HEK293 (cell line): ENCODE measurements at regions of chr17 and their contacts with region 1.

Region 1: DNA sequence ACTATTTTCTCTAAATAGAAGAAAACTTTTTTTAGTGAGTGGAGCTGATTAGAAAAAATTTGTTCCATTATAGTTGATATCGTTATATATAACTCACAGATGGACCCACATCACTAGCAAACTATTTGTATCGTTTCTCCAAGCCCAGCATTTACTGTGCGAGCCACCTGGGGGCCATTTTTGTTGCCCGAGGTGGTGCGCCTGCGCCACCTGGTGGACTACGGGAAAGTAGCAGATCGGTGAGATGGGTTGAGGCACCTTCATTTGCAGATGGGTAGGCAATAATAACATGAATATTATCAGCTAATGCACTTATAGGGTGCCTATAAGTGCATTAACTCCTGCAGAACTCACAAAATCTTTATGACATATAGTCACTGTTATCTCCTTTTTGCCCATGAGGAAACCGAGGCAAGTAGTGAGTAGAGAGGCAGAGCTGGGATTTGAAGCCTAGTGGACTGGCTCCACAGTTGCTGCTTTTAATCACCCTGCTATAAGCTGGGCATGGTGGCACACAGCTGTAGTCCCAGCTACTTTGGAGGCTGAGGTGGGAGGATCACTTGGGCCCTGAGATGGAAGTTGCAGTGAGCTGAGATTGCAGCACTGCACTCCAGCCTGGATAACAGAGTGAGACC is 23.2 kb upstream of the NTN1 start:
- H3K4me3 ChIP-seq: no peak overlapping the region
- H3K27ac ChIP-seq: no peak overlapping the region
- H3K4me1 ChIP-seq: peaks cover 5% of the 10 kb centered on the region; the same call in 1 of the 2 replicates
- CTCF ChIP-seq: peak; percentile 77

Region 2: DNA sequence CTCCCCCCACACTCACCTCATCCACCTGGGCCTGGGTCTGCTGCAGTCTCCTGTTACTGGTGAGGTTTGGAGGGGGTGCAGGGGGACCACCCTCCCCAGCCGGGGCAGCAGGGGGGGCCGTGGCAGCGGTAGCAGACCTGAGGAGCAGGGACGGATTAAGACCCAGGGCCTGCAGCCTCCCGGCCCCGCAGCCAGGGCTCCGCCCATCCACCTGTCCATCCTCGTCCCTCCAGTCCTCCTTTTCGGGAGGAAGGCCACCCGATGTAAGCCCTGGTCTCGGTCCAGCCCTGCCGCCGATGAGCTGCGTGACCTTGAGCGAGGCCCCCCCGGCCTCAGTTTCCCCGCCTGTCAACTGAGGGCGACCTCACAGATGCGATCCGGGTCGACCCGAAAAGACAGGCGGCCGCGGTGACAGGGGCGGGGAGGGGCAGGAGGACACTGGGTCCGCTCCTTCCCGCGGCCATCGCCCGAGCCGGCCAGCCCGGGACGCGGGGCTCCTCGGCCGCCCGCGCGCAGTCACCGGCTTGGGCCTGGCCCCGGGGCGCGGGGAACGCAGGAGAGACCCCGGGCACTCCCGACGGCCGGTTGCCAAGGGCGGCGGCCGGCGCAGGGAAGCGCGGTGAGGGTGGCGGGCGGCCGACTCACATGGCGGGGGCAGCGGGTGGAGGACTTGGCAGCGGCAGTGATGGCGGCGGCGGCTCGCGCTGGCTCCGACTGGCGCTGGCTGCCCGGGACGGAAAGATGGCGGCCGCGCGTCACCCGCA is 835.7 kb before region 1 on chr17 and contains the start of gene VAMP2:
- CTCF ChIA-PET with region 1: no interaction called
- POLR2A ChIA-PET with region 1: no interaction called
- H3K4me3 ChIP-seq: peak within 1 kb of the TSS; percentile 89
- H3K27ac ChIP-seq: peak within 1 kb of the TSS; percentile 96
- H3K4me1 ChIP-seq: peaks cover 24% of the 10 kb centered on the region
- CTCF ChIP-seq: no peak

Region 3: GRCh38 chr17:8887834-8888703 is 110.0 kb before region 1 on chr17:
- CTCF ChIA-PET with region 1: interaction called, 12 read pairs
- POLR2A ChIA-PET with region 1: no interaction called
- H3K4me3 ChIP-seq: no peak overlapping the region
- H3K27ac ChIP-seq: no peak overlapping the region
- H3K4me1 ChIP-seq: no peaks in the 10 kb centered on the region
- CTCF ChIP-seq: peak; percentile 70

Region 4: DNA sequence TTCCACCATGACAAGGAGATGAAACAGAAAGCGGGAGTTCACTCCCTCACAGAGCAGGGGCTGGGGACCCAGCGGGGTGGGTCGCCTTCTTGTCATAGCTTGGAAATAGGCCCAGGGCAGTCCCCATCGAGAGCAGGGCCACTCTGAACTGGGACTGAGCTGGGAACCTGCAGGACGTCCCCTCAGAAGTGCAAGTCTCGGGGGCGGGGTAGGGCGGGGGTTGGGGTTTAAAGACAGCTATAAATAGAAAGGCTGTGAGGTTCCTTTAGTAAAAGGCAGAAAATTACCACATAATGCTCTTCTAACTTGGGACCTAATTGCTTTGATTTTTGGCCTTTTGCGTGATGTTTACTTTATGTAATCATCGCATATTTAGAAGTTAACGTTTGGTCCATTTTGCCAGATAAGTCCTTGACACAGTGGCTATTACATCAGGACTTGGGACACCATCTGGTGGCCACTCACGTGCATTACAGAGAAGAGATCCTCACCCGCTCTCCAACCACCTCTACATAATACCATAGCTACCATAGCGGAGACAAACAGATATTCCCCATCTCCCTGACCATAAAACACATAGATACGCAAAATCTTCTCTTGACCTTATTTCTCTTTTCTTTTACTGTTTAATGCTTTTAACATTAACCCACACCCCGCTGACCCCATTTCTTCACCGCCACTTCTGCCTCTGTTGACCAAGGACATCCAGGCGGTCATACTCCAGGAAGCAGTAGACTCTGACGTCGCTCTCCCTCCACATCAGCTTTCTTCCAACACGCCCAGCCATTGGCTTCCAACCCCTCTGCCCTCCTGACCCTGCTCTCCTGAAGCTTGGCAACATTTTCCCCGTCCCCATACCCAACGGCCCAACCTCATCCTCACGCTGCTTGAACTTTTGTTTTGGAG is 103.2 kb before region 1 on chr17:
- CTCF ChIA-PET with region 1: interaction called, 12 read pairs
- POLR2A ChIA-PET with region 1: no interaction called
- H3K4me3 ChIP-seq: no peak overlapping the region
- H3K27ac ChIP-seq: no peak overlapping the region
- H3K4me1 ChIP-seq: no peaks in the 10 kb centered on the region
- CTCF ChIP-seq: peak; percentile 68

Region 5: DNA sequence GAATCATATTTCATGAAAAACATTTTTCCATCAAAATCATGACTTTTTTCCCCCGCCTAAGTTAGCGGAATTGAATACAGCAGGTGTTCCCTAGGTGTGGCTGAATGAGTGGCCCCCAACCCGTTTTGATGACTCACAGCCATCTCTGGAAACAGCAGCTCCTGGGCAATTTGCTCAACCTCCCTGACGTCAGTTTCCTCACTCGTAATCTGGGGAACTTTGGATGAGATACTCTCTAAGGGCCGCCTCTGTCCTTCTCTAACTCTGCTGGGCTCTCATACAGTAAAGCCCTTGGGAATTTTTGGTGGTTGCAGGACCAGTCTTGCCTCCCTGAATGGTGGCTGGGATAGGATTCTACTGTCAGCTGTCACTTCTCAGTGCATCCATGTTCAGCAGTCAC is 11.6 kb after region 1 on chr17:
- CTCF ChIA-PET with region 1: interaction called, 60 read pairs
- POLR2A ChIA-PET with region 1: interaction called, 3 read pairs
- H3K4me3 ChIP-seq: no peak overlapping the region
- H3K27ac ChIP-seq: no peak overlapping the region
- H3K4me1 ChIP-seq: peaks cover 5% of the 10 kb centered on the region
- CTCF ChIP-seq: no peak

Region 6: DNA sequence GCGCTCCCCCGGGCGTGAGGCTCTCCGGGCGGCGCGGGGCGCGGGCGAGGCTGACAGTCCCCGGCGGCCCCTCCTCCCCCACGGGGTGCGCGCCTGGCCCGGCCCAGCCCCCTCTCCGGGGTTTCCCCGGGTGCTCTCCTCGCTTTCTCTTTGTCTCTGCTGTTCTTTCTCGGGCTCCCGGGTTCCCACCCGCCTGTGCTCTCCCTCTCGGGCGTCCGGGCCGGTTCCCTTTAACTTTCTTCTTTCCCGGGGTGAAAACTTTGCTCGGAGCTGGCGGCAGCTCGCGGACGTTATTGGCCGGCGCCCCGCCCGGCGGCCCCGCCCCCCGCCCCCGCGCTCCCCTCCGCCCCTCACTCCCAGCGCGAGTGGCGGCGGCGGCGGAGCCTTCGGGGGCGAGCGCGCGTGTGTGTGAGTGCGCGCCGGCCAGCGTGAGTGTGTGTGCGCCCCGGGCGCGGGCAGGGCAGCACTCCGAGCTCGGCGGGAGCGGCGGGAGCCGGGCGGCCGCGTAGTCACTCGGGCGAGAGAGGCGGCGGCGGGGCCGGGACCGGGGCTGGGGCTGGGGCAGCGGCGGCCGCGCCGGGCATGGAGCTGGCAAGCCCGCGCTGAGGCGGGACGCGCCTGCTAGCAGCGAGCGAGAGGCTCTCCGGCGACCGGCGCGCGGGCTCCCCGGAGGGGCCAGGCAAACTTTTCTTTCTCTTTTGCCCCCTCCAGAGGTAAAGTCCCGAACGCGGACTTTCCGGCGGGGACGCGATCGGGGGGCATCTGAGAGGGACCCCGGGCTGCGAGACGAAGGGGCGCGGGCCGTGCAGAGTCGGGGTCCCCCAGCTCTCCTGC is 23.3 kb after region 1 on chr17 and contains the start of gene NTN1:
- CTCF ChIA-PET with region 1: interaction called, 8 read pairs
- POLR2A ChIA-PET with region 1: interaction called, 10 read pairs
- H3K4me3 ChIP-seq: peak within 1 kb of the TSS; percentile 71
- H3K27ac ChIP-seq: peak within 1 kb of the TSS; percentile 80
- H3K4me1 ChIP-seq: peaks cover 22% of the 10 kb centered on the region
- CTCF ChIP-seq: peak; percentile 55; the same call in 1 of the 2 replicates

Region 7: GRCh38 chr17:9522074-9522473 is 524.0 kb after region 1 on chr17:
- CTCF ChIA-PET with region 1: interaction called, 18 read pairs
- POLR2A ChIA-PET with region 1: no interaction called
- H3K4me3 ChIP-seq: no peak overlapping the region
- H3K27ac ChIP-seq: no peak overlapping the region
- H3K4me1 ChIP-seq: peaks cover 10% of the 10 kb centered on the region
- CTCF ChIP-seq: peak; percentile 42; the same call in 1 of the 2 replicates

Region 8: GRCh38 chr17:9553181-9553580 is 555.1 kb after region 1 on chr17:
- CTCF ChIA-PET with region 1: interaction called, 11 read pairs
- POLR2A ChIA-PET with region 1: no interaction called
- H3K4me3 ChIP-seq: no peak overlapping the region
- H3K27ac ChIP-seq: no peak overlapping the region
- H3K4me1 ChIP-seq: peaks cover 2% of the 10 kb centered on the region; the same call in 1 of the 2 replicates
- CTCF ChIP-seq: no peak